AG04449 (cell line): ENCODE measurements at regions of chr14 and their contacts with region 1.

Region 1: GRCh38 chr14:67426983-67427606 is 15.1 kb upstream of the PLEK2 start:
- DNase-seq: no peak
- H3K4me3 ChIP-seq: no peak overlapping the region
- CTCF ChIP-seq: peak; percentile 78

Region 2: DNA sequence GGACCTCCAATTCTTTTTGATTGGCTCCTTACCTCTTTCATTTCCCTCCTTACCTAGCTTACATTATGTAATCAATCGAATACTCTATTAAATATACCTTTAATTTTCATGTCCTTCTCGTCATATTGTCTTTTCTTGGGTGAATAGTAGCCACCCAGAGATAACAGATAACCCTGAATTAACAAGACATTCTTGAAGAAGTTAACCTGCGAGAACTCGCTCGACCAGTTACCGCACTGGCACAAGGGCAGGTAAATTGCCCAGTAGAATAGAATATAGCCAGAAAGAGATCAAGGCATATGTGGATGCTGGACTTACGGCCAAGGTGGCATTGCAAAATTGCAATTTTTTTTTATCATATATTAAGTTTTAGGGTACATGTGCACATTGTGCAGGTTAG is 655.9 kb before region 1 on chr14:
- CTCF ChIA-PET with region 1: no interaction called
- POLR2A ChIA-PET with region 1: no interaction called
- DNase-seq: no peak
- H3K4me3 ChIP-seq: no peak overlapping the region
- CTCF ChIP-seq: no peak

Region 3: GRCh38 chr14:67411820-67412421 is 15.2 kb before region 1 on chr14 and contains the start of gene PLEK2:
- CTCF ChIA-PET with region 1: interaction called, 68 read pairs
- POLR2A ChIA-PET with region 1: no interaction called
- DNase-seq: no peak
- H3K4me3 ChIP-seq: peak within 1 kb of the TSS; percentile 57
- CTCF ChIP-seq: no peak

Region 4: DNA sequence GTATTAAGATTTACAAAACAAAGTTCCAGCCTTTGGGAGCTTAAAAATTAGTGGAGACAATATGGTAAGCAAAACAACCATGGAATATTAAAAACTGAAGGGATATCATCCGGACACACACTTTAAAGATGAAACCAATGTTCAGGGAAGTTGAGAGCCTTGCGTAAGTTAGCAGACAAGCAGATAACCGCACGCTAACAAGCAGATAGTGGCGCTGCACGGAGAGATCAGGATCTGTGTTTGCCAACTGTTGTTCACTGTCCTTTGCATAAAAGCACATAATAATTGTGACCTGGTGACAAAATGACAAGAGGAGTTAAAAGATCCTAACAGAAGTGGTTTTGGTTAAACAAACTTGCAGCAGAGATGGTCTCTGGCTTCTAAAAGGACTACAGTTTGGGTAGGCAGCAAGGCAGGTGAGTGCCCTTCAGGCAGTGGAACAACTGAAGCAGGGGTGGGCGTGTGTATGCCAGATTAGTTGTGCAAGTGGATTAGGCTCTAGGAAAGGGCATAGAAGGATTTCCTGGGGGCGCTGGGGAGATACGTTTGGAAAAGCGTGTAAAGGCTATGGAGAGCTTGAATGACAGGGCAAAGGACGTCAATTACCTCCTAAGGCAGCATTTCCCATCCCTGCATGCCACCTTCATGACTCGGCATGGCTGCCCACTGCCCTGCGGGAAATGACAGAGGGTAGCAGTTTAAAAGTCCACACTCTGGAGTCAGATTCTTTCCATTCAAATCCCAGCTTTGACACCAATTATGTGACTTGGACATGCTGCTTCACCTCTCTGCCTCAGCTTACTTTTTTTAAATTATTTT is 76.0 kb after region 1 on chr14:
- CTCF ChIA-PET with region 1: no interaction called
- POLR2A ChIA-PET with region 1: no interaction called
- DNase-seq: no peak
- H3K4me3 ChIP-seq: no peak overlapping the region
- CTCF ChIP-seq: no peak

Region 5: DNA sequence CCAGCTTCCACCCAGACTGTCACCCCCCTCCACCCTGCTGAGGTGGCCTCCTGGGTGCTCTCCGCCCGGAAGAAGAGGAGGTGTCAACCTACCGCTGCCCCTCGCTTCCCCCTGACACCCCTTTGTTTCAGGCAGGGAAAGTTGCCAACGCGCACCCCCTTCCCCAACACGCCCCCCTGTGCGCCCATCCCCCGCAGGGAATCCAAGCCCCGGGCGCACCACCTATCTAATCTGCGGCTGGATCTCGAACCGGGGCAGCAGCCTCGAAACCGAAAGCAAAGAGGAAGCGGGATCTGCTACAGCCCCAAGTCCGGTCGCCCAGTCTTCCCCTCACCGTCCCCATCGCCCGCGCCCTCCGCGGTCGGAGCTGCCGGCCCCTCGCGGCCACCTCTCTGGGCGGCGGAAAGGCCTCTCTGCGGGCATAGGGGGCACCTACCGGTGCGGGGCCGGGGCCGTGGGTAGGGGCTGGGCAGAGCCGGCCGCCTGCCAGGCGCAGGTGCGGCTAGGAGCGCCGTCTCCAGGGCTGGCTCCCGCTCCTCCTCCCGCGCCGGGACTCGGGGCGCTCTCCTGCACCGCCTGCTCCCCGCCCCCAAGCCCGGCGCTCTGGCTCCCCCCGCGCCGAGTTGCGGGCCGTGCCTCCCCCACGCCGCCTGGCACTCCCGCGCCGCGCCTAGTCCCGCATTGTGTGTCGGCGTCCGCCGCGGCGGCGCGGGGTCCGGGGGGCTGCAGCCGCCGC is 87.7 kb after region 1 on chr14:
- CTCF ChIA-PET with region 1: interaction called, 14 read pairs
- POLR2A ChIA-PET with region 1: no interaction called
- DNase-seq: no peak
- H3K4me3 ChIP-seq: peak overlapping the region; percentile 67
- CTCF ChIP-seq: no peak

Region 6: DNA sequence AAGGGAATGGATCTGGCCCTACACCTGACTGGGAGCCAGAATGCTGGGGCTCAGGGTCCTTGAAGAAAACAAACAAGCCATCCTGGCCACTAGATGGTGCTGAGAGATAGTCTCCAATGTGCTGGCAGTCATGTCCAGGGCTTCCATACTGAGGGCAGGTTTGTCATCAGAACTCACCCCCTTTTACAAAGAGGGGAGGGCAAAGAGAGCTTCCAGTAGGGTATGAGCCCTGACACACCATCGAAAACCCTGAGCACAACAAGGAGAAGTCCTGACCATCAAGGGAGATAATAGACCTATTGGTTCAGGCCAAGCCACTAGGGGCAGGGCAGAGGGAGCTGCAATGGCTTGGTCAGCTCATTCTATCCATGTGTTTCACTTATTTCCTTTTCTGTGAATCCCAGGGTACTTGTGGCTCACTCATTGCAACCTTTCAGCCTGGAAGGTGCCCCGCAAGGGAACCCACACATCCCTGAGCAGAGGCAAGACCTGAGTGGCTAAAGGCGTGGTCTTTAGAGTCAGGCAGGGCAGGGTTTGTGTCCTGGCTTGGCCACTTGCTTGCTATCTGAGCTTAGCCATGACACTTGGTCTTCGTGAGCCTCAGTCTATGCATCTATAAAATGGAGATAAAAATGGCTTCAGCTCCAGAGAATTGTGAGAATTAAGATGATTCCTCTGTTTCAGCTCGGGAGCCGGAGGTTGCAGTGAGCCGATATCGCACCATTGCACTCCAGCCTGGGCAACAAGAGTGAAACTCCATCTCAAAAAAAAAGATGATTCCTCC is 99.8 kb after region 1 on chr14:
- CTCF ChIA-PET with region 1: interaction called, 11 read pairs
- POLR2A ChIA-PET with region 1: no interaction called
- DNase-seq: no peak
- H3K4me3 ChIP-seq: no peak overlapping the region
- CTCF ChIP-seq: peak; percentile 45

Region 7: GRCh38 chr14:67557126-67557525 is 130.0 kb after region 1 on chr14:
- CTCF ChIA-PET with region 1: interaction called, 25 read pairs
- POLR2A ChIA-PET with region 1: no interaction called
- DNase-seq: no peak
- H3K4me3 ChIP-seq: no peak overlapping the region
- CTCF ChIP-seq: no peak

Region 8: GRCh38 chr14:67599698-67600561 is 172.8 kb after region 1 on chr14 and contains the start of gene PIGH:
- CTCF ChIA-PET with region 1: interaction called, 20 read pairs
- POLR2A ChIA-PET with region 1: no interaction called
- DNase-seq: no peak
- H3K4me3 ChIP-seq: peak within 1 kb of the TSS; percentile 86
- CTCF ChIP-seq: peak; percentile 69